CD4-positive, alpha-beta memory T cell (primary cell): ENCODE measurements at regions of chr11 and their contacts with region 1.

Region 1: GRCh38 chr11:118488480-118489109 is 38.7 kb upstream of the TTC36 start:
- DNase-seq: peak; percentile 79 to 83 (median 81)
- H3K4me3 ChIP-seq: no peak overlapping the region
- H3K4me3 Mint-ChIP-seq: no peak overlapping the region
- H3K27ac ChIP-seq: peak overlapping the region; percentile 10
- H3K27ac Mint-ChIP-seq: peak overlapping the region; percentile 1 to 79 (median 13)
- H3K4me1 ChIP-seq: no peaks in the 10 kb centered on the region
- H3K4me1 Mint-ChIP-seq: peaks cover 0 to 5% (median 4%) of the 10 kb centered on the region in 4 donors
- H3K27me3 ChIP-seq: no peaks in the 10 kb centered on the region
- H3K27me3 Mint-ChIP-seq: no peaks in the 10 kb centered on the region

Region 2: DNA sequence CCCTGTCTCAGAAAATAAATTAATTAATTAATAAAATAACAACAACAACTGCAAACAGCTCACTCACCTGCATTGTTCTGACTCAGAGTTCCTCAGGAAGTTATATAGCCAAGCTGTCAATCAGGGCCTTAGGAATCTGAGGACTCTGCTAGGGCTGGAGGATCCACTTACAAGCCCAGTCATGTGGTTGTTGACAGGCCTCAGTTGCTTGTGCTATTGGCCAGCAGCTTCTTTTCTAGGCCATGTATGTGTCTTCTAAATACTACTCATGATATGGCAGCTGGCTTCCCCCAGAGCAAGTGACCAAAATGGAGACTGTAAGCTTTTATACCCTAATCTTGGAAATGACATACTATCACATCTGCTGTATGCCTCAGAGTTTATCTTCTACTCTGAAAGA is 108.0 kb before region 1 on chr11:
- CTCF ChIA-PET with region 1: interaction called, 3 read pairs
- POLR2A ChIA-PET with region 1: no interaction called
- intact Hi-C with region 1: loop called (anchors 5 kb)
- DNase-seq: no peak
- H3K4me3 ChIP-seq: no peak overlapping the region
- H3K4me3 Mint-ChIP-seq: no peak overlapping the region
- H3K27ac ChIP-seq: no peak overlapping the region
- H3K27ac Mint-ChIP-seq: peak overlapping the region in 1 of 7 donors; percentile 29
- H3K4me1 ChIP-seq: no peaks in the 10 kb centered on the region
- H3K4me1 Mint-ChIP-seq: no peaks in the 10 kb centered on the region
- H3K27me3 ChIP-seq: no peaks in the 10 kb centered on the region
- H3K27me3 Mint-ChIP-seq: no peaks in the 10 kb centered on the region

Region 3: GRCh38 chr11:118401151-118401878 is 87.3 kb before region 1 on chr11 and contains the start of gene ATP5MG:
- CTCF ChIA-PET with region 1: interaction called, 10 read pairs
- POLR2A ChIA-PET with region 1: interaction called, 6 read pairs
- intact Hi-C with region 1: loop called (anchors 1 kb)
- DNase-seq: peak; percentile 92 to 94 (median 94)
- H3K4me3 ChIP-seq: peak within 1 kb of the TSS; percentile 87 to 93
- H3K4me3 Mint-ChIP-seq: peak within 1 kb of the TSS; percentile 91 to 99 (median 96)
- H3K27ac ChIP-seq: peak within 1 kb of the TSS; percentile 82
- H3K27ac Mint-ChIP-seq: peak within 1 kb of the TSS; percentile 99 to 100 (median 99)
- H3K4me1 ChIP-seq: peaks cover 72% of the 10 kb centered on the region
- H3K4me1 Mint-ChIP-seq: peaks cover 39 to 87% (median 65%) of the 10 kb centered on the region in 4 donors
- H3K27me3 ChIP-seq: no peaks in the 10 kb centered on the region
- H3K27me3 Mint-ChIP-seq: no peaks in the 10 kb centered on the region
- total RNA-seq, gene ATP5MG: 158 to 161 TPM

Region 4: GRCh38 chr11:118462178-118462577 is 26.4 kb before region 1 on chr11:
- CTCF ChIA-PET with region 1: no interaction called
- POLR2A ChIA-PET with region 1: no interaction called
- intact Hi-C with region 1: no loop called
- DNase-seq: no peak
- H3K4me3 ChIP-seq: no peak overlapping the region
- H3K4me3 Mint-ChIP-seq: no peak overlapping the region
- H3K27ac ChIP-seq: no peak overlapping the region
- H3K27ac Mint-ChIP-seq: no peak overlapping the region
- H3K4me1 ChIP-seq: peaks cover 29% of the 10 kb centered on the region
- H3K4me1 Mint-ChIP-seq: peaks cover 28 to 47% (median 38%) of the 10 kb centered on the region in 4 donors
- H3K27me3 ChIP-seq: no peaks in the 10 kb centered on the region
- H3K27me3 Mint-ChIP-seq: no peaks in the 10 kb centered on the region